BJ (cell line): ENCODE measurements at regions of chrX and their contacts with region 1.

Region 1: DNA sequence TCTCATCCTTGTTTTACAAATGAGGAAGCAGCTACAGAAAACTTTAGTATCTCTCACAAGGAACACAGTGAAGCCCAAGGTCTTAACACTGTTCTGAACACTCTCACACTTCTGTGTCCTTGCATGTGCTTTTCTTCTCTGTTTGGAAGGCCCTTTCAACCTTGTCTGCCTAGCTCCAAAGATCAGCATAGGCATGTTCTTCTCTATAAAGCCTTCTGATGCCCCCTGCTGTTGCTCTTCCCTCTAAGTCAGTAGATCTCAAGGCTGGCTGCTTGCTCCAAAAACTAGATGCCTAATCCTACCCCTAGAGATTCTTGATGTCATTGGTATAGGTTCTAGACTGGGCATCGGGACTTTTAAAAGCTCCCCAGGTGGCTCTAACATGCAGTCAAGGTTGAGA is 5.9 kb downstream of the APOO start:
- DNase-seq: no peak
- H3K4me3 ChIP-seq: no peak overlapping the region
- H3K27me3 ChIP-seq: no peaks in the 10 kb centered on the region
- CTCF ChIP-seq: peak; percentile 61

Region 2: GRCh38 chrX:23694606-23695005 is 207.2 kb before region 1 on chrX:
- CTCF ChIA-PET with region 1: interaction called, 76 read pairs
- POLR2A ChIA-PET with region 1: no interaction called
- DNase-seq: no peak
- H3K4me3 ChIP-seq: no peak overlapping the region
- H3K27me3 ChIP-seq: no peaks in the 10 kb centered on the region
- CTCF ChIP-seq: peak; percentile 41

Region 3: GRCh38 chrX:23699636-23700194 is 202.1 kb before region 1 on chrX:
- CTCF ChIA-PET with region 1: interaction called, 76 read pairs
- POLR2A ChIA-PET with region 1: no interaction called
- DNase-seq: no peak
- H3K4me3 ChIP-seq: no peak overlapping the region
- H3K27me3 ChIP-seq: no peaks in the 10 kb centered on the region
- CTCF ChIP-seq: no peak

Region 4: GRCh38 chrX:23756157-23756559 is 145.6 kb before region 1 on chrX:
- CTCF ChIA-PET with region 1: interaction called, 15 read pairs
- POLR2A ChIA-PET with region 1: no interaction called
- DNase-seq: no peak
- H3K4me3 ChIP-seq: no peak overlapping the region
- H3K27me3 ChIP-seq: no peaks in the 10 kb centered on the region
- CTCF ChIP-seq: peak; percentile 48

Region 5: GRCh38 chrX:23782863-23783568 is 118.8 kb before region 1 on chrX and contains the start of gene SAT1:
- CTCF ChIA-PET with region 1: interaction called, 29 read pairs
- POLR2A ChIA-PET with region 1: interaction called, 3 read pairs
- DNase-seq: peak; percentile 38
- H3K4me3 ChIP-seq: peak within 1 kb of the TSS; percentile 76
- H3K27me3 ChIP-seq: no peaks in the 10 kb centered on the region
- CTCF ChIP-seq: peak; percentile 74
- polyA plus RNA-seq, gene SAT1: 46.1 and 76.0 TPM in 2 replicates

Region 6: GRCh38 chrX:23937100-23937499 is 35.3 kb after region 1 on chrX:
- CTCF ChIA-PET with region 1: no interaction called
- POLR2A ChIA-PET with region 1: no interaction called
- DNase-seq: no peak
- H3K4me3 ChIP-seq: no peak overlapping the region
- H3K27me3 ChIP-seq: no peaks in the 10 kb centered on the region
- CTCF ChIP-seq: no peak

Region 7: GRCh38 chrX:24117258-24117657 is 215.5 kb after region 1 on chrX:
- CTCF ChIA-PET with region 1: no interaction called
- POLR2A ChIA-PET with region 1: no interaction called
- DNase-seq: peak; percentile 39
- H3K4me3 ChIP-seq: no peak overlapping the region
- H3K27me3 ChIP-seq: no peaks in the 10 kb centered on the region
- CTCF ChIP-seq: no peak

Region 8: GRCh38 chrX:24343719-24344118 is 441.9 kb after region 1 on chrX:
- CTCF ChIA-PET with region 1: no interaction called
- POLR2A ChIA-PET with region 1: no interaction called
- DNase-seq: no peak
- H3K4me3 ChIP-seq: no peak overlapping the region
- H3K27me3 ChIP-seq: no peaks in the 10 kb centered on the region
- CTCF ChIP-seq: no peak